Activated CD4-positive, alpha-beta T cell treated with anti-CD3 and anti-CD28 coated beads, Interleukin-2, amount 10 ng/mL, durations not matched to agents 24 days and 14 days (primary cell): ENCODE measurements at regions of chr4 and their contacts with region 1.

Region 1: DNA sequence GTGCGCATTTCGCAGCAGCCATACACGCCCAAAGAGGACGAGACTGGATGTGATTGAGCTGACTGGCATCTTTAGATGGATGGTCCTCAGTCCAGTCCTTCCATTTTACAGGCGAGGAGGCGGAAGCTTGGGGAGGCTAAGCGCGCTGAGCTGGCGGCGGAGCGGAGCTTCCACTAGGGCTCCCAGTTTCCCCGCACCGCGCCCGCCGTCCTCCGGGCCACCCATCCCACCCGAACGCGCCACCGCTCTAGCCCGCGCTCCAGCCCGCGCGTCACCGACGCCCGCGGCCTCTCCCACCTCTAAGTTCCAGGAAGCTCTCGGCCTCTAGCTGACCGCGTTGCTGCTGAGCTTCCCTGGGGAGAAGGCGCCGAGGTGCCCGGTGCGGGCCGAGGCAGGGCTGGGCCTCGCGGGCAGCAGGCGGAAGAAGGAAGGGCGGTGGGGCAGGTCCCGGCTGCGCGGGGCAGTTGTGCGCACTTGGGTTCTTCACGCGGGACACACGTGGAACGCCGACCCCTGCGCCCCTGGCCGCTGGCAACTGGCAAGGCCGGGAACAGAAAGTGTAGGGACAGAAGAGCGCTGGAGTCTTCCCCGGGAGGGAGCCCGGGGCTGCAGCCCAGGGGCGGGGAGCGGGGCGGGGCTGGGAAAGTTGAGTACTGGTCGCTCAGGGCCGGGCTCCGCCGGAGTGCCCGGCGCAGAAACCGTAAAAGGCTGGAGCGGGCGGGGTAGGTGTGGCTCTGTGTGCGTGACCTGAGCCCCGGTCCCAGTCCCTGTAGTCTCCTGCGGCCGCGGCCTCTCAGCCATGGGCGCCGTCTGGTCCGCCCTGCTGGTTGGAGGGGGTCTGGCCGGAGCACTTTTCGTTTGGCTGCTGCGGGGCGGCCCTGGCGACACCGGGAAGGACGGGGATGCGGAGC is at the start of gene STBD1:
- DNase-seq: peak; percentile 83
- H3K4me3 Mint-ChIP-seq: peak within 1 kb of the TSS; percentile 68
- H3K27ac Mint-ChIP-seq: peak within 1 kb of the TSS; percentile 61
- H3K4me1 Mint-ChIP-seq: peaks cover 34% of the 10 kb centered on the region
- H3K27me3 Mint-ChIP-seq: peaks cover 33% of the 10 kb centered on the region
- total RNA-seq, gene STBD1: 0.14 and 0.35 TPM in 2 replicates

Region 2: GRCh38 chr4:75963558-75963957 is 342.7 kb before region 1 on chr4:
- intact Hi-C with region 1: no loop called
- DNase-seq: no peak
- H3K4me3 Mint-ChIP-seq: no peak overlapping the region
- H3K27ac Mint-ChIP-seq: no peak overlapping the region
- H3K4me1 Mint-ChIP-seq: peaks cover 6% of the 10 kb centered on the region
- H3K27me3 Mint-ChIP-seq: no peaks in the 10 kb centered on the region

Region 3: DNA sequence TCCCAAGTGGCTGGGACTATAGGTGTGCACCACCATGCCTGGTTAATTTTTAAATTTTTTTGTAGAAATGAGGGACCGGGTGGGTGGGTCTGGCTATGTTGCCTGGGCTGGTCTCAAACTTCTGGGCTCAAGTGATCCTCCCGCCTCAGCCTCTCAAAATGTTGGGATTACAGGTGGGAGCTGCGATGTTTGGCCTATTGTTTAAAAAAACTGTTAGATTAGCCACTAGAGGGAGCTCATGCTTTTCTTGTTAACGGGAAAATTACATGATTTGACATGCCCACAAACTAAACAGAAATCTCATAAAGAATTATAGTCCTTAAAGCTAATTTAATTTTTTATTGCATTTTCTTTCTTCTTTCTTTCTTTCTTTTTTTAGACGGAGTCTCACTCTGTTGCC is 310.5 kb before region 1 on chr4:
- intact Hi-C with region 1: loop called (anchors 10 kb)
- DNase-seq: peak; percentile 71
- H3K4me3 Mint-ChIP-seq: no peak overlapping the region
- H3K27ac Mint-ChIP-seq: no peak overlapping the region
- H3K4me1 Mint-ChIP-seq: peaks cover 5% of the 10 kb centered on the region
- H3K27me3 Mint-ChIP-seq: peaks cover 10% of the 10 kb centered on the region

Region 4: DNA sequence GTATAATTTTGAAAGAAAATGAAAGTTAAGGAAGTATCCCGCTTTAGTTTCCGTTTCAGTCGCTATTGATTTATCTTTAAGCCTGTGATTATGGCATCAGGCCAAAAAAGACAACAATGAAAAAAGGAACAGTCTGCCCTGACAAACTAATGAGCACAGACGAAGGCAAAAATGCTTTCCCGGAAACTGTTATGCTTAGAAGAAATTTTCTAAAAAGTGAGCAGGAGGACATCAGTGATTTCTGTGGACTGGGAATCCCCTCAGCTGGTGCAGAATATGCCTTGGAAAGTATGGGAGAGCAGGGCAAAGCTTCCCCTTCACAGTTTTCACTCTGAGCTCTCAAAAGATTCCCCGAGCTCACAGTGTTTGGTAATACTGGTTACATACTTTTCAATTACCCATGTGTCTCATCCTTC is 277.9 kb before region 1 on chr4:
- intact Hi-C with region 1: loop called (anchors 10 kb)
- DNase-seq: no peak
- H3K4me3 Mint-ChIP-seq: peak overlapping the region; percentile 70
- H3K27ac Mint-ChIP-seq: peak overlapping the region; percentile 57
- H3K4me1 Mint-ChIP-seq: peaks cover 28% of the 10 kb centered on the region
- H3K27me3 Mint-ChIP-seq: peaks cover 7% of the 10 kb centered on the region

Region 5: DNA sequence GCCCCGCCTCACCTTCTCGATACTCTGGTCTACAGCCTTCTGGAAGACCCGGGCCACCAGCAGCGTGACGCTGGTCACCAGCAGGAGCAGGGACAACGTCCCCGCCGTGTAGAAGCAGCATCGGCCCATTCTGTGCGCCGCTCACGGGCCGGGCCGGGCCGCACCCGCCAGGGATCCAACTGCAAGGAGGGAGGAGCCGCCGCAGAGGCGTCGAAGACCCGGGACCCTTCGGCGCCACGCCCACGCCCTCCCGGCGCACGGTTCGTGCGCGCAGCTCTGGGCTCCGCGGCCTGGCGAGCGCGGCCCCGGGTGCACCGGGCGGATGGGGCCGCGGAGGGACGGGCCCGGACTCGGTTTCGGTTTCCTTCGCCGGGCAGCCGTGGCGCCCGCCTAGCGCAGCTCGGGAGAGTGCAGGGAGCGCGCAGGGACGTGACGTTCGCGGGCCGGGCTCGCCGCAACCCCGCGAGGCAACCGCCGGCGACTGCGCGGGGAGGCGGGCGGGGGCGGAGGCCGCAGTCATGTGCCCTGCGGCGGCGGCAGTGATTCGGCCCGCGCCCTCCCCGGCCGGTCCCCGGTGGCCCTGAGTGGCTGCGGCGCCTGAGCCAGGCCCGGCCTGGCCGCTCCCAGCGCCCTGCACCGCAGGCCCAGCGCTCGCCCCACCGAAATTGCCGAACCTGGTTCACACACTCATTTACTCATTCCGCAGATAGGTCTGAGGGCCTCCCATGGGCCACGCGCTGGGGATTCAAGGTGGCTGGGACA is 92.6 kb before region 1 on chr4 and contains the start of gene SCARB2:
- intact Hi-C with region 1: loop called (anchors 2 kb)
- DNase-seq: peak; percentile 93
- H3K4me3 Mint-ChIP-seq: peak within 1 kb of the TSS; percentile 86
- H3K27ac Mint-ChIP-seq: peak within 1 kb of the TSS; percentile 83
- H3K4me1 Mint-ChIP-seq: peaks cover 23% of the 10 kb centered on the region
- H3K27me3 Mint-ChIP-seq: peaks cover 32% of the 10 kb centered on the region
- total RNA-seq, gene SCARB2: 1.5 and 1.7 TPM in 2 replicates

Region 6: GRCh38 chr4:76279472-76279871 is 26.8 kb before region 1 on chr4:
- intact Hi-C with region 1: no loop called
- DNase-seq: peak; percentile 70
- H3K4me3 Mint-ChIP-seq: no peak overlapping the region
- H3K27ac Mint-ChIP-seq: no peak overlapping the region
- H3K4me1 Mint-ChIP-seq: no peaks in the 10 kb centered on the region
- H3K27me3 Mint-ChIP-seq: peaks cover 19% of the 10 kb centered on the region